Mammary epithelial cell (primary cell): ENCODE measurements at regions of chrX and their contacts with region 1.

Region 1: GRCh38 chrX:10841579-10841978 is 221.2 kb upstream of the MID1 start:
- DNase-seq: no peak
- H3K4me3 ChIP-seq: no peak overlapping the region
- H3K27ac ChIP-seq: no peak overlapping the region
- H3K4me1 ChIP-seq: no peaks in the 10 kb centered on the region
- H3K27me3 ChIP-seq: no peaks in the 10 kb centered on the region
- CTCF ChIP-seq: no peak

Region 2: DNA sequence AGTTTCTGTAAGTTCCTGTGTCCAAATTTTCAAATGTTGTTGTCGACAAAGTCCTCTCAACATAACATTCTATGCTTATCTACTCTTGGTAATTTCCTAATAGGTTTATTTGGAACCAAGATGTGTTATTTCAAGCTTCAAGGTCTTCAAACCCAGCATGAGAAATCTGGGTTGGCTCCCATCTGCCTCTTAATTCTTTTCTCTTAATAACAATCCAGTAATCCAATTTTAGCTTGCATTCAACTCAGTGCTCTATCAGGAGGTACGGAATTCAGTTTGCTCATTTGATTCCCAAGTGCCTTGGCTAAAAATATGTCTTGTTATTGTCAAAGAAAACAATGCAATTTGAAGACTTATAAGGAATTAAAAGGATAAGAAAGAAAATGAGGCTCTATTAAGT is 14.3 kb after region 1 on chrX:
- CTCF ChIA-PET with region 1: interaction called, 11 read pairs
- dilution Hi-C with region 1: no loop called
- in situ Hi-C with region 1: no loop called
- intact Hi-C with region 1: no loop called
- DNase-seq: no peak
- H3K4me3 ChIP-seq: no peak overlapping the region
- H3K27ac ChIP-seq: no peak overlapping the region
- H3K4me1 ChIP-seq: no peaks in the 10 kb centered on the region
- H3K27me3 ChIP-seq: no peaks in the 10 kb centered on the region
- CTCF ChIP-seq: no peak